HepG2 (cell line): ENCODE measurements at regions of chr13 and their contacts with region 1.

Region 1: GRCh38 chr13:107650081-107650701 is 565.1 kb downstream of the LIG4 start:
- DNase-seq: peak; percentile 16
- ATAC-seq: peak; percentile 99
- H3K4me3 ChIP-seq: no peak overlapping the region
- H3K27ac ChIP-seq: no peak overlapping the region
- H3K4me1 ChIP-seq: no peaks in the 10 kb centered on the region
- H3K27me3 ChIP-seq: no peaks in the 10 kb centered on the region; a peak in 1 of 5 replicates
- CTCF ChIP-seq: peak; percentile 86
- EP300 ChIP-seq: no peak
- POLR2A ChIP-seq: no peak
- RAD21 ChIP-seq: peak; percentile 62

Region 2: DNA sequence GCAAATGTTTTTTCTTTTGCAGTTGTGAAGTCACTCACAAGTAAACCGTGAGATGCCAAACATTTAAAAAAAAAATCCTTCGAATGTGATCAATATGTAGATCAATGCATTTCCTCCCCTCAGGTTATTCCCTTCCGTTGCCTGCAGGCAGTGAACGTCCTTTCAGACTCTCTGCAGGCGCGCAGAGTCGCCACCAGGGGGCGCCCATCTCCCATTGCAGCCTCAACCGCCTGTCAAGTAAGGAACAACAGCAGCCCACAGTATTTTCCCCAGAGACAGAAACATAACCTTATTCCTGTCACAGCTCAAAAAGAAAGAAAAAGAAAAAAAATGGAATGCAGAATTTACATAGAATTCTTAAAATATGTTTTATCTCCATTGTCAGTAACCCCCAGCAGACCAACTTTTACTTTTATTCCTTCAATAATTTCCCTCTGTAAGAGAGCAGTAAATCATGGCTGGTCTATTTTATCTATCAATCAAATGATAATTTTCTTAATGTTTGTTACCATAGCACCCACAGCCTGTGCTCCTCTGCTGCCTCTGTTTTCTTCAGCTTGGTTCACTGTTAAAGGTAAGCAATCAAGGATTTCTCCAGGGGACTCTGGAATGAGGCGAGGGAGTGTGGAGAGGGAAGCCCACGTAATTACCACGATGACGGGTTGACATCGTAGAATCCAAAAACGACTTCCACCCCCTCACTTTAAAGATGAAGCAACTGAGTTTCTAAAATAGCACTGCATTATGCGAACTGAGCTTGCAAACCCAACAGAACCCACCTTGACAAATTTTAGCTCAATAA is 444.7 kb before region 1 on chr13:
- CTCF ChIA-PET with region 1: interaction called, 33 read pairs
- POLR2A ChIA-PET with region 1: no interaction called
- in situ Hi-C with region 1: loop called (anchors 5 kb)
- intact Hi-C with region 1: no loop called
- DNase-seq: peak; percentile 31
- ATAC-seq: peak; percentile 94
- H3K4me3 ChIP-seq: no peak overlapping the region
- H3K27ac ChIP-seq: no peak overlapping the region
- H3K4me1 ChIP-seq: peaks cover 13% of the 10 kb centered on the region
- H3K27me3 ChIP-seq: no peaks in the 10 kb centered on the region
- CTCF ChIP-seq: peak; percentile 84
- EP300 ChIP-seq: no peak
- POLR2A ChIP-seq: no peak
- RAD21 ChIP-seq: 0 out of 2 replicates have a peak, but pooled peaks have one; percentile 45

Region 3: GRCh38 chr13:107211073-107211472 is 439.1 kb before region 1 on chr13:
- CTCF ChIA-PET with region 1: interaction called, 33 read pairs
- POLR2A ChIA-PET with region 1: no interaction called
- in situ Hi-C with region 1: loop called (anchors 5 kb)
- intact Hi-C with region 1: loop called (anchors 1 kb)
- DNase-seq: peak; percentile 78
- ATAC-seq: peak; percentile 100
- H3K4me3 ChIP-seq: no peak overlapping the region
- H3K27ac ChIP-seq: no peak overlapping the region
- H3K4me1 ChIP-seq: no peaks in the 10 kb centered on the region
- H3K27me3 ChIP-seq: peaks cover 0 to 26% of the 10 kb centered on the region in 2 experiments; a peak in 2 of 5 replicates
- CTCF ChIP-seq: peak; percentile 90
- EP300 ChIP-seq: no peak
- POLR2A ChIP-seq: no peak
- RAD21 ChIP-seq: no peak; the same call in 1 of the 2 replicates

Region 4: GRCh38 chr13:107373551-107373950 is 276.6 kb before region 1 on chr13:
- CTCF ChIA-PET with region 1: interaction called, 3 read pairs
- POLR2A ChIA-PET with region 1: no interaction called
- in situ Hi-C with region 1: no loop called
- intact Hi-C with region 1: loop called (anchors 1 kb)
- DNase-seq: no peak
- ATAC-seq: peak; percentile 51
- H3K4me3 ChIP-seq: no peak overlapping the region
- H3K27ac ChIP-seq: no peak overlapping the region
- H3K4me1 ChIP-seq: no peaks in the 10 kb centered on the region
- H3K27me3 ChIP-seq: no peaks in the 10 kb centered on the region
- CTCF ChIP-seq: peak; percentile 40
- EP300 ChIP-seq: no peak
- POLR2A ChIP-seq: no peak
- RAD21 ChIP-seq: no peak

Region 5: GRCh38 chr13:107767119-107767518 is 116.9 kb after region 1 on chr13:
- CTCF ChIA-PET with region 1: no interaction called
- POLR2A ChIA-PET with region 1: no interaction called
- in situ Hi-C with region 1: no loop called
- intact Hi-C with region 1: no loop called
- DNase-seq: no peak
- ATAC-seq: no peak
- H3K4me3 ChIP-seq: no peak overlapping the region
- H3K27ac ChIP-seq: no peak overlapping the region
- H3K4me1 ChIP-seq: no peaks in the 10 kb centered on the region
- H3K27me3 ChIP-seq: no peaks in the 10 kb centered on the region
- CTCF ChIP-seq: no peak
- EP300 ChIP-seq: no peak
- POLR2A ChIP-seq: no peak
- RAD21 ChIP-seq: no peak